ENCODE measurements at regions of chr2 and their contacts with region 1.

Region 1: DNA sequence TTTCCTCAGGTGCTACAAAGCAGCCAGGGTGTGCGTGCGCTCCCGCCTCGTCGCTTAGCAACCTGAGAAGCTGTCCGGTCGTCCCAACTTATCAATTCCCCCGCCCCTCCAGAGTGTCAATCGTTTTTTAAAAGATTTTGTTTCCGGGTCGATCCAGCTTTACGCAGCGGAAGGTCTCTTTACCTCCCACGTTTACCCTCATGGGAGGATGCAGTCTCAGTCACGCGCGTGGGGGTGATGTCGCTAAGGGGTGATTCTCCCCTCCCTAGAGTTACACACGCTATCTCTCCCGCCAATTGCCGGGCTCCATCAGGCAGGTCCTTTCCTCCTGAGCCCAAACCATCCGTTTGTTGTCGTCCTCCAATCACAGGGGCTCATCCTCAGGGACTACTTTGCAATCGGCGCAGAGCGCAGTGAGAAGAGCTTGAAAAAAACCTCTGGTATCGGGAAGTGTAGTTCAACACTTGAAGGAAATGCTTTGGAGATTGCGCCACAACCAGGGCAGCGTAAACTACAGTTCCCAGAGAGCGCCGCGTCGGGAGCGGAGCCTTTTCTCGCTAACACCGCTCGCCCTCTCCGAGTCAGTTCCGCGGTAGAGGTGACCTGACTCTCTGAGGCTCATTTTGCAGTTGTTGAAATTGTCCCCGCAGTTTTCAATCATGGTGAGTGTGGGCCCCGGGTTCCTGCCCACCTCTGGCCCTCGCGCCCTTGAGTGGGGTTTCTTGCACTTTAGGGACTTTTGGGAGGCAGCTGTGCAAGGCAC is at the starts of genes MDH1 and WDPCP:
- DNase-seq: peak; percentile 97
- H3K4me3 Mint-ChIP-seq: peak within 1 kb of the TSS; percentile 98
- H3K27ac Mint-ChIP-seq: peak within 1 kb of the TSS; percentile 92
- H3K4me1 Mint-ChIP-seq: peaks cover 32% of the 10 kb centered on the region
- H3K27me3 Mint-ChIP-seq: no peaks in the 10 kb centered on the region
- total RNA-seq, gene MDH1: 195 and 208 TPM in 2 replicates
- total RNA-seq, gene WDPCP: 6.0 and 8.9 TPM in 2 replicates

Region 2: DNA sequence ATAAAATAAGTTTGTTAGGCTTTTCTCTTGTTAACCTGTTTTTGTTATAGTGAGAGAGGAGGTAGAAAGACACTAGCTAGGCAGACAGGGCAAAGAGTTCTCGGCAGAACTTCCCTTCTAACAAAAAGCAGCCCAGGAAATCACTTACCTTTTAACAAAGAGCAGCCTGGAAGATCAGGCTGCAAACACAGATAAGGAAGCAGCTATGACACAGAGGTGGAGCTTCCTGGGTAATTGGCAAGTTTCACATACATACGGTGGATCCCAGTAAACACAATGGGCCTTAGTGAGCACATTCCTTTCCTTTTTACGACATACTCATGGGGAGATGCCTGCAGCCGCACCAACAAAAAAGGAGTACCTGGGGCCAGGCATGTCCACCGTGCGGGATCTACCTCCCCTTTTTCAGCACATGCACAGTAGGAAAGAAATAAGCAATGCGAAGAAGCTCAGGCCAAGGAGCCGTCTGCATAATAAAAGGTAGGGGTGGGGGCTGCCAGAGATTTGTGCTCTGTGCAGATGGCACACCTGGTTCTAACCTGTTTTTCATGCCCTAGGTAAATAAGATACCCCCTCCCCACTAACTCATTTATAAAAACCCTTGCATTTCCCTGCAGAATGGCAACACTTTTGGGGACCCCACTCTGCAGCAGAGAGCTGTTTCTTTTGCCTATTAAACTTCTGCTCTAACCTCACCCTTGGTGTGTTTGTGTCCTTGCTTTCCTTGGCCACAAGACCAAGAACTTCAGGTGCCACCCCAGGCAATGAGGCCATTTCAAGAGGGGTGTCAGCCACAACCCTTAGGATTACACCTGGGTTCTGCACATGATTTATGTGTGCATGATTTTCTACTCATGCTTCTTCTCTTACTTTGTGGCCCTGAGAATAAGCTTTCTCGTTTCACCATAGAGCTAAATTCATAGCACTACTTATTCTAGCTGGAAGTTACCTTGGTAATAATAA is 26.7 kb after region 1 on chr2:
- intact Hi-C with region 1: no loop called
- DNase-seq: no peak
- H3K4me3 Mint-ChIP-seq: no peak overlapping the region
- H3K27ac Mint-ChIP-seq: no peak overlapping the region
- H3K4me1 Mint-ChIP-seq: no peaks in the 10 kb centered on the region
- H3K27me3 Mint-ChIP-seq: peaks cover 25% of the 10 kb centered on the region

Region 3: DNA sequence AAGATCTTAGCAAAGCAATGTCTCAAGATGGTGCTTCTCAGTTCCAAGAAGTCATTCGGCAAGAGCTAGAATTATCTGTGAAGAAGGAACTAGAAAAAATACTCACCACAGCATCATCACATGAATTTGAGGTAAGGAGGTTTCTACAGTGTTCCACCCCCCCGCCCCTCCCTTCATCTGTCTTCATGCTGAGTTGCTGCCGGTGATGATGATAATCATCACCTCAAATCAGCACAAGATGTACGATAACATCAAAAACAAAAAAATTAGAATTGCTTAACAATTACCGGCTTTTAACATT is 267.7 kb after region 1 on chr2:
- intact Hi-C with region 1: loop called (anchors 5 kb)
- DNase-seq: peak; percentile 82
- H3K4me3 Mint-ChIP-seq: peak overlapping the region; percentile 75
- H3K27ac Mint-ChIP-seq: peak overlapping the region; percentile 92
- H3K4me1 Mint-ChIP-seq: peaks cover 56% of the 10 kb centered on the region
- H3K27me3 Mint-ChIP-seq: no peaks in the 10 kb centered on the region

Region 4: DNA sequence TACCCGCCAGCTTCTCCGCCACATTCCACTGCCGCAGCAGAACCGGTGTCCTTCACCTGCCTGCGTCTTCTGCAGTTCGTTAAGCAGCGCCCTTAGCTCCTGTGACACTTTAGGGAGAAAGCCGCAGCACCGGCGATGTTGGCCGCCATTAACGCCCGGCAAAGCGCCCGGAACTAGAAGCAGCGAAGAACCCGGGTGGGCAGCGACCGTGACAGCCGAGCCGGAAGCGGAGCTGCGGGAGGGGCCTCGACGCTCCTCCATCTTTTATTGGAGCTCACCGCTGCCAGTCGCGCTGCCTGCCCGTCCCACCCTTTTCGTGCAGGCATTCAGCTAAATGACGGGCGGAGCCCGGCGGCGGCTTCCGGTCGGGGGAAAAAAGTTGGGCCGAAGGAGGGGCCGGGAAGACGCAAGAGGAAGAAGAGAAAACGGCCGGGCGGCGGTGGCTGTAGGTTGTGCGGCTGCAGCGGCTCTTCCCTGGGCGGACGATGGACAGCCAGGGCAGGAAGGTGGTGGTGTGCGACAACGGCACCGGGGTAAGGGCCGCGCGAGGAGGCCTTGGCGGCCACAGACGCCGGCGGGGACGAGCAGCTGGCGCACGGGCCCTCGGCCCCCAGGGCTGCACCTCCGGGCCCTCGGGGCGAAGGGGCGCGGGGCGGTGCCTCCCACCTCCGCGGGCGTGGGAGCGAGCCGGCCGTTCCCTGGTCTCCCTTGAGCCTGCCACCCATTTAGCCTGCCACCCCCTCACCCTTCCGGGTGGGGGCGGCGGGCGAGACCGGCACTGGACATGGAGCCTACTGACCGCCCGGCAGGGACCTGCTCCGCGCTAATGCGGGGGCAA is 1639.1 kb after region 1 on chr2 and contains the start of gene ACTR2:
- intact Hi-C with region 1: loop called (anchors 1 kb)
- DNase-seq: peak; percentile 99
- H3K4me3 Mint-ChIP-seq: peak within 1 kb of the TSS; percentile 97
- H3K27ac Mint-ChIP-seq: peak within 1 kb of the TSS; percentile 98
- H3K4me1 Mint-ChIP-seq: peaks cover 28% of the 10 kb centered on the region
- H3K27me3 Mint-ChIP-seq: peaks cover 1% of the 10 kb centered on the region
- total RNA-seq, gene ACTR2: 298 TPM in 2 replicates